ENCODE measurements at regions of chr19 and their contacts with region 1.

Region 1: DNA sequence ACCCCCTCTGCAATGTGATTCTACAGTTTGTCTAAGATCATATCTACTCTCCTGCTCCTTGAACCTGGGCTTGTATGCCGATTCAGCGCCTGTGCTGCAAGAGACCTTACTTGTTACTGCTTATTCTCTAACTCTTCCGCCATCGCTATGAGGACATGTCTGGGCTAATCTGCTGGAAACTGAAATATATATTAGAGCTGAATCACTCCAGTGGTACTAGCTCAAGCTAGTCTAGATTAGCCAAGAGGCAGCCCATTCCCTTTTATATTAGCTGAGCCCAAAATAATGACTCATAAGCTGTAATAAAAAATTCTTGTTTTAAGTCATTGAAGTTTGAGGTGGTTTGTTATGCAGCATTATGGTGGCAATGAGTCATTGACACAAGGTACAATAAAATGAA is 52.8 kb downstream of the SLC6A16 start:
- DNase-seq: no peak
- H3K4me3 ChIP-seq: no peak overlapping the region
- H3K27ac ChIP-seq: no peak overlapping the region
- H3K27me3 ChIP-seq: peaks cover 3% of the 10 kb centered on the region
- CTCF ChIP-seq: no peak

Region 2: DNA sequence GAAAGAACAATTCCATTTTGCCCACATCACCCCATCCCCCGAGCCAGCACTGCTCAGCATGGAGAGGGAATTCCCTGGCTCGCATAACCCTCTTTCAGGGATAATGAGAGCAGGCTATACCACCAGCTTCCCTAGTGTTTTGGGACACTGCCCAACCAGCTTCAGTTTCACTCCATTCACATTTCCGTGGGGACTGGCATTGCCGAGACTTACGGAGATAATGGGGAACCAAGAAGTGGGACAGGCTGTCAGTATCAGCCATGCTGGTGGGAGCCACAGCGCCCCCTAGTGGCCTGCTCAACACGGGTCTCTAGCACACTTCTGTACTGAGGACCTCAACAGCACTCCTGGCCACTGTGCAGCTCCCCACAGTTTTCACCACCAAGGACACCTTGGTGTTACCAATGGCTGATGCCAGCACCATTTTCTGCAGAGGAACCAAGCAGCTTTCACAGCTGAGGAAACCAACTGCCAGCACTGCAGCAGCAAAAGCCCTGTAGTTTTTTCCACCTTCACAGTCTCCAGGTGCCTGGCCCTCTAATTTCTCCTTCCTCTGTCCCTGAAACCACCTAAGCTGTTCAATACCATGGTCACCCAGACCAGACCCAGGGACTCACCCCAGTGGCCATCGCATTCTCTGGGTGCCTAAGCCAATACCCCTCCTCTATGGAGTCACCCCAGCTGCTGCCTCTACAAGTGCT is 29.1 kb after region 1 on chr19:
- CTCF ChIA-PET with region 1: interaction called, 17 read pairs
- POLR2A ChIA-PET with region 1: interaction called, 4 read pairs
- DNase-seq: no peak
- H3K4me3 ChIP-seq: peak overlapping the region; percentile 13; the same call in 1 of the 2 replicates
- H3K27ac ChIP-seq: no peak overlapping the region
- H3K27me3 ChIP-seq: no peaks in the 10 kb centered on the region
- CTCF ChIP-seq: peak; percentile 81